ENCODE measurements at regions of chr17 and their contacts with region 1.

Region 1: GRCh38 chr17:2303204-2304188 is at the starts of genes SMG6 and SRR:
- DNase-seq: peak; percentile 93 to 94 (median 93)
- H3K4me3 ChIP-seq: peak within 1 kb of the TSS; percentile 84 to 94
- H3K4me3 Mint-ChIP-seq: peak within 1 kb of the TSS; percentile 92 to 95 (median 93)
- H3K27ac ChIP-seq: peak within 1 kb of the TSS; percentile 88
- H3K27ac Mint-ChIP-seq: peak within 1 kb of the TSS; percentile 90 to 93 (median 91)
- H3K4me1 ChIP-seq: peaks cover 26% of the 10 kb centered on the region
- H3K4me1 Mint-ChIP-seq: peaks cover 24 to 59% (median 41%) of the 10 kb centered on the region in 4 donors
- H3K27me3 ChIP-seq: no peaks in the 10 kb centered on the region
- H3K27me3 Mint-ChIP-seq: no peaks in the 10 kb centered on the region
- total RNA-seq, gene SMG6: 51.1 to 58.5 TPM
- total RNA-seq, gene SRR: 6.9 to 13.1 TPM

Region 2: GRCh38 chr17:2251098-2251497 is 52.4 kb before region 1 on chr17:
- CTCF ChIA-PET with region 1: no interaction called
- POLR2A ChIA-PET with region 1: no interaction called
- intact Hi-C with region 1: no loop called
- DNase-seq: no peak
- H3K4me3 ChIP-seq: no peak overlapping the region
- H3K4me3 Mint-ChIP-seq: no peak overlapping the region
- H3K27ac ChIP-seq: no peak overlapping the region
- H3K27ac Mint-ChIP-seq: peak overlapping the region in 6 of 7 donors; percentile 24 to 91 (median 84)
- H3K4me1 ChIP-seq: peaks cover 16% of the 10 kb centered on the region
- H3K4me1 Mint-ChIP-seq: peaks cover 25 to 52% (median 30%) of the 10 kb centered on the region in 4 donors
- H3K27me3 ChIP-seq: no peaks in the 10 kb centered on the region
- H3K27me3 Mint-ChIP-seq: no peaks in the 10 kb centered on the region

Region 3: GRCh38 chr17:2266045-2266864 is 37.2 kb before region 1 on chr17:
- CTCF ChIA-PET with region 1: no interaction called
- POLR2A ChIA-PET with region 1: interaction called, 26 read pairs
- intact Hi-C with region 1: loop called (anchors 1 kb)
- DNase-seq: peak; percentile 90 to 97 (median 91)
- H3K4me3 ChIP-seq: peak overlapping the region; percentile 13 to 26
- H3K4me3 Mint-ChIP-seq: peak overlapping the region; percentile 72 to 86 (median 85)
- H3K27ac ChIP-seq: peak overlapping the region; percentile 87
- H3K27ac Mint-ChIP-seq: peak overlapping the region; percentile 98 to 99 (median 99)
- H3K4me1 ChIP-seq: peaks cover 82% of the 10 kb centered on the region
- H3K4me1 Mint-ChIP-seq: peaks cover 52 to 86% (median 73%) of the 10 kb centered on the region in 4 donors
- H3K27me3 ChIP-seq: no peaks in the 10 kb centered on the region
- H3K27me3 Mint-ChIP-seq: no peaks in the 10 kb centered on the region

Region 4: GRCh38 chr17:2347547-2348307 is 44.2 kb after region 1 on chr17:
- CTCF ChIA-PET with region 1: interaction called, 11 read pairs
- POLR2A ChIA-PET with region 1: interaction called, 12 read pairs
- intact Hi-C with region 1: loop called (anchors 5 kb)
- DNase-seq: no peak
- H3K4me3 ChIP-seq: no peak overlapping the region
- H3K4me3 Mint-ChIP-seq: no peak overlapping the region
- H3K27ac ChIP-seq: no peak overlapping the region
- H3K27ac Mint-ChIP-seq: no peak overlapping the region
- H3K4me1 ChIP-seq: peaks cover 9% of the 10 kb centered on the region
- H3K4me1 Mint-ChIP-seq: peaks cover 1 to 16% (median 12%) of the 10 kb centered on the region in 4 donors
- H3K27me3 ChIP-seq: no peaks in the 10 kb centered on the region
- H3K27me3 Mint-ChIP-seq: no peaks in the 10 kb centered on the region

Region 5: GRCh38 chr17:2392252-2393173 is 89.0 kb after region 1 on chr17:
- CTCF ChIA-PET with region 1: no interaction called
- POLR2A ChIA-PET with region 1: interaction called, 12 read pairs
- intact Hi-C with region 1: loop called (anchors 1 kb)
- DNase-seq: peak; percentile 95 to 99 (median 98)
- H3K4me3 ChIP-seq: peak overlapping the region; percentile 38 to 91
- H3K4me3 Mint-ChIP-seq: peak overlapping the region; percentile 88 to 98 (median 96)
- H3K27ac ChIP-seq: peak overlapping the region; percentile 100
- H3K27ac Mint-ChIP-seq: peak overlapping the region; percentile 95 to 100 (median 99)
- H3K4me1 ChIP-seq: peaks cover 60% of the 10 kb centered on the region
- H3K4me1 Mint-ChIP-seq: peaks cover 31 to 69% (median 49%) of the 10 kb centered on the region in 4 donors
- H3K27me3 ChIP-seq: no peaks in the 10 kb centered on the region
- H3K27me3 Mint-ChIP-seq: peaks cover 0 to 1% of the 10 kb centered on the region in 2 donors

Region 6: GRCh38 chr17:2711601-2712299 is 408.3 kb after region 1 on chr17 and contains the start of gene CLUH:
- CTCF ChIA-PET with region 1: no interaction called
- POLR2A ChIA-PET with region 1: no interaction called
- intact Hi-C with region 1: loop called (anchors 2 kb)
- DNase-seq: peak; percentile 93 to 97 (median 95)
- H3K4me3 ChIP-seq: peak within 1 kb of the TSS; percentile 69 to 77
- H3K4me3 Mint-ChIP-seq: peak within 1 kb of the TSS; percentile 85 to 92 (median 89)
- H3K27ac ChIP-seq: peak within 1 kb of the TSS; percentile 62
- H3K27ac Mint-ChIP-seq: peak within 1 kb of the TSS; percentile 77 to 93 (median 91)
- H3K4me1 ChIP-seq: peaks cover 40% of the 10 kb centered on the region
- H3K4me1 Mint-ChIP-seq: peaks cover 23 to 42% (median 33%) of the 10 kb centered on the region in 4 donors
- H3K27me3 ChIP-seq: no peaks in the 10 kb centered on the region
- H3K27me3 Mint-ChIP-seq: no peaks in the 10 kb centered on the region
- total RNA-seq, gene CLUH: 43.5 to 44.1 TPM